Right cardiac atrium (tissue), 5 donors: ENCODE measurements at regions of chr5 and their contacts with region 1.

Region 1: DNA sequence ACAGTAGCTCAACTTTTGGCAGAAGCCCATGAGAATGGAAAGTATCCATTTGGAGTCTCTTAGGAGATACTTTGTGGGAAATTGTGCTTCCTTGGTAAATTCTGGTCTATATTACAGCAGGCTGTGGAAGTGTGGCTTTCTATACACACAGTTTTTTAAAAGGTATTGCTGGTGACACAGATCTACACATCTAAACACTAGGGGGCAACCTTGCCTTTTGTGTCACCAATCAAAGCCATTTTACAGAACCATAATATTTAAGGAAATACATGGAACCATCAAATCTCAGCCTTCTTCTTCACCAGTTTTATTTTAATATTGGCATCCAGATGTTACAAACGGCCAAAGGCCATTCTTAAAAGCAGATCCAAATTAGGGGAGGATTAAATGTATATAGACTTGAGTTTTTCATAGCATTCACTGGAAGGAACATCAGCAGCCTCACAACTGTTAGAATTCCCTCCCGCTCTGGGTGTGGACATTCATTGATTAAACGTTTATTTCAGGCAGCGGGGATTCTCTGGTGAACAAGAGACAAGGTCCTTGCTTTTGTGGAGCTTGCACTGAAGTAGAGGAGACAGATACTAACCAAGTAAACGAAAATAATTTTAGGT is 132.4 kb upstream of the EPB41L4A start:
- DNase-seq: no peak
- ATAC-seq: peak; percentile 12 to 54
- H3K4me3 ChIP-seq: no peak overlapping the region
- H3K27ac ChIP-seq: no peak overlapping the region
- H3K4me1 ChIP-seq: peaks cover 5% of the 10 kb centered on the region
- H3K27me3 ChIP-seq: no peaks in the 10 kb centered on the region

Region 2: DNA sequence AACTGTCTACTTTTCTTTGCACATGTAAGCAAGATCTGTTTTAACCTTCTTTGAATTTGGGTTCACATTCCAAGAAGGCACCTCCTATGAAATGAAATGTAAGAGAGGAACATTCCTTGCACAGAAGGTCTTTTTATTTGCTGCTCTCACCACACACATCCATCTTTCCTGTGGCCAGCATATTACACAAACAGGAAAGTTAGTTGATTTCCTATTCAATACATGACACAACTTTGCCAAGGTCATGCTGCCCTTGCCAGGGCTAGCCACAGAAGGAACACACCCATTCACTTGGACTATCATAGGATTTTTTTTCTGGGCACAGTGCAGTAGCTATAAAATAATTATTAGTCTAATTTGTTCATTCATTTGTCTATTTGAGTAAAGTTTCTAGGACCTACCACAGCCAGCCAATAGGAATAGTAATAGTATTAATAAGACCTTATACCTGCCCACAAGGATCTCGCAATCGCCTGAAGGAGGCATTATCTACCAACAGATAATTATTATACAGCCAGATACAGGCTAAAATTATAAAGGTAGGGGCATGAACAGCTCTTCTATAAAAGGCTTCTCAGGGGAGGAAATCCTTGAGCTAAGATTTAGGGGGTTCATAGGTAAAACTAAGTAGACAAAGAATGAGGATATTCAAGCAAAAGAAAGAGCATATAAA is 716.5 kb before region 1 on chr5:
- intact Hi-C with region 1: no loop called
- DNase-seq: peak in 1 of 3 donors; percentile 32
- ATAC-seq: no peak
- H3K4me3 ChIP-seq: no peak overlapping the region
- H3K27ac ChIP-seq: no peak overlapping the region
- H3K4me1 ChIP-seq: no peaks in the 10 kb centered on the region
- H3K27me3 ChIP-seq: no peaks in the 10 kb centered on the region

Region 3: GRCh38 chr5:112757468-112758208 is 206.1 kb after region 1 on chr5:
- intact Hi-C with region 1: loop called (anchors 2 to 5 kb)
- DNase-seq: no peak
- ATAC-seq: peak; percentile 77
- H3K4me3 ChIP-seq: no peak overlapping the region
- H3K27ac ChIP-seq: peak overlapping the region; percentile 38
- H3K4me1 ChIP-seq: no peaks in the 10 kb centered on the region
- H3K27me3 ChIP-seq: no peaks in the 10 kb centered on the region

Region 4: DNA sequence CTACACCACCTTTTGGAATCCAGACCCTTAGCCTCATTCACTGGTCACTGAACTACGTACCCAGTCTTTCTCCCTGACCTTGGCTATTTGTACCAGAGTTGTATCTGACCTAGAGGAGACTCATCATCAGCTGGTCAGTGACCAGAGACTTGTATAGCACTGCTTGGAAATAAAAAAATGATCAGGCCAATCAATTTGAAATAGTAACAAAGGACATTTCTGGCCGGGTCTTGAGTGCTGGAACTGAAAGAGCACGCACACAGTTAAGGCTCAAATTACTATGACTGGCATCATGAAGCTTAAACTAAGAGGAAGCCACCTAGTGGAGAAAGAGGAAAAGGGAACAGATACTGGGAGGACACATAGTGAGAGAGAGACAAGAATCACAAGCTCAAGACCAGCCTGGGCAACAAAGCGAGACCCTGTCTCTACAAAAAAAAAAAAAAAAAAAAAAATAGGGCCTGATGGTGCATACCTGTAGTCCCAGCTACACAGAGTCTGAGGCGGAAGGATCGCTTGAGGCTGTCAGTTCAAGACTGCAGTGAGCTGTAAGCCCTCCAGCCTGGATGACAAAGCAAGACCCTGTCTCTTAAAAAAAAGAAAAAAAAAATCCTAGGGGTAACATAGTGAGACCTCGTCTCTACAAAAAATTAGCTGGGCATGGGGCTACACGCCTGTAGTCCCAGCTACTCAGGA is 296.7 kb after region 1 on chr5:
- intact Hi-C with region 1: loop called in 1 of 4 experiments (anchors 10 kb)
- DNase-seq: peak in 1 of 3 donors; percentile 24
- ATAC-seq: peak; percentile 89
- H3K4me3 ChIP-seq: no peak overlapping the region
- H3K27ac ChIP-seq: no peak overlapping the region
- H3K4me1 ChIP-seq: no peaks in the 10 kb centered on the region
- H3K27me3 ChIP-seq: no peaks in the 10 kb centered on the region

Region 5: DNA sequence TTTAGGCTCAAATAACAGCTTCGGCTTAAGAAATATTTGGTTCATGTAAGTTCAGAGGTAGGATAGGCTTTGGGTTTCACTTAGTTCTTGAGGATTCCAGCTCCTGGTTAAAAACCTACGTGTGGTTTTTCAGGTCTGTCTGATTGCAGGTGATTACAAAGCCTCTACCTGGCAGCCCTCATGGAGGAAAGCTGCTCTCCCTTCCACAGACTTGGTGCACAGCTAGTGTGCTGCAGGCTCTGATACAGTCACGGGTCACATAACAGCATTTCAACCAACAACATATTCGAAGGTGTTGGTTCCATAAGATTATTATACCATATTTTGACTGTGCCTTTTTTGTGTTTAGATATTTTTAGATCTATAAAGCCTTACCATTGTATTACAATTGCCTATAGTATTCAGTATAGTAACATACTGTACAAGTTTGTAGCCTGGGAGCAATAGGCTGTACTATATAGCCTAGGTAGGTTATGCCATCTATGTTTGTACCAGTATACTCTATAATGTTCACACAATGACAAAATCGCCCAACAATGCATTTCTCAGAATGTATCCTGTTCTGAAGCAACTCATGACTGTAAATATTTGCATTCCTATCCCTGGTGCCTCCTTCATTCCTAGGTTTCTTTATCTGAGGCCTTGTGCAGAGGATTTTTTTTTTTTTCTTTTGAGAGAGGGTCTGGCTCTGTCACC is 417.0 kb after region 1 on chr5:
- intact Hi-C with region 1: loop called in 1 of 4 experiments (anchors 10 kb)
- DNase-seq: no peak
- ATAC-seq: no peak
- H3K4me3 ChIP-seq: no peak overlapping the region
- H3K27ac ChIP-seq: no peak overlapping the region
- H3K4me1 ChIP-seq: no peaks in the 10 kb centered on the region
- H3K27me3 ChIP-seq: no peaks in the 10 kb centered on the region